ENCODE measurements at regions of chr1 and their contacts with region 1.

Region 1: DNA sequence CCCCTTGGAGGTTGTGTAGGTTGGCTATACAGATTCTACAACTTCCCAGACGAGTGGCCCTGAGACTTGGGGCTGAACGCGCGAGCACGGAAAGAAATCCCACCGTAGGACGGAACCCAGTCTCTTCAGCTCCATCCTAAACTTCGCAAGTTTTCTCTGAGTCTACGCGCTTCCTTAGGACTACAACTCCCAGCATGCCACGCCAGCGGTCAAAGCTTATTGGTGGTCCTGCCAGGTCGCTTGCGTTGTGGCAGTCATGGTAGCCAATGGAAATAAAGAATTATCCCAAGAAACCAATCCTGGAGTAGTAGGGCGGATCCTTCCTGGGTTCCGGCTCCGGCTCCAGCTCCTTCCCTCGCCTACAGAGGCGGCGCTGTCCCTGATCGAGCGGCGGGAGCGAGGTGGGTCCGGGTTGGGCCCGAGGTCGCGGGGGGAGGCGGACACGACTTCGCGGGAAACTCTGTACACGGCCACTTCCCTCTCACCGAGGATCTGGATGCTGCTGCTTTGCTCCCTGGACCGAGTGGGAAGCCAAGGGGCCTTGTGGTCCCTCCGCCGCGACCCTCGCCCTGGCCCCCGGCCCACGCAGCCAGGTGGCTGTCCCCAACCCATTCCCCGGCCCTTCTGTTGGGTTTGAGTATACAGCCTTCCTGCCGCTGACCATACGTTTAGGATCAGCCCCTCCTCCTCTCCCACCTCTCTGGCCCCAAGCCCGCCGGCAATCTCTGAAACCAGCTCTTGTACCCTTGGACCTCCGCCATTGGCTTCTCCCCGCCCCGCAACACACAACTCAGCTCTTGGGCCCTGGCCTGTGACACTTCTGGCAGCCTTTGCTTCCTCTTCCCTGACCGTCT is at the start of gene ZNF691:
- DNase-seq: peak; percentile 92 to 96
- ATAC-seq: peak; percentile 98 to 100 (median 100)
- H3K4me3 ChIP-seq: peak within 1 kb of the TSS; percentile 73
- H3K27ac ChIP-seq: peak within 1 kb of the TSS; percentile 76
- H3K4me1 ChIP-seq: peaks cover 18% of the 10 kb centered on the region
- H3K27me3 ChIP-seq: no peaks in the 10 kb centered on the region
- CTCF ChIP-seq: peak; percentile 49
- total RNA-seq, gene ZNF691: 4.8 to 8.0 (median 6.4) TPM

Region 2: DNA sequence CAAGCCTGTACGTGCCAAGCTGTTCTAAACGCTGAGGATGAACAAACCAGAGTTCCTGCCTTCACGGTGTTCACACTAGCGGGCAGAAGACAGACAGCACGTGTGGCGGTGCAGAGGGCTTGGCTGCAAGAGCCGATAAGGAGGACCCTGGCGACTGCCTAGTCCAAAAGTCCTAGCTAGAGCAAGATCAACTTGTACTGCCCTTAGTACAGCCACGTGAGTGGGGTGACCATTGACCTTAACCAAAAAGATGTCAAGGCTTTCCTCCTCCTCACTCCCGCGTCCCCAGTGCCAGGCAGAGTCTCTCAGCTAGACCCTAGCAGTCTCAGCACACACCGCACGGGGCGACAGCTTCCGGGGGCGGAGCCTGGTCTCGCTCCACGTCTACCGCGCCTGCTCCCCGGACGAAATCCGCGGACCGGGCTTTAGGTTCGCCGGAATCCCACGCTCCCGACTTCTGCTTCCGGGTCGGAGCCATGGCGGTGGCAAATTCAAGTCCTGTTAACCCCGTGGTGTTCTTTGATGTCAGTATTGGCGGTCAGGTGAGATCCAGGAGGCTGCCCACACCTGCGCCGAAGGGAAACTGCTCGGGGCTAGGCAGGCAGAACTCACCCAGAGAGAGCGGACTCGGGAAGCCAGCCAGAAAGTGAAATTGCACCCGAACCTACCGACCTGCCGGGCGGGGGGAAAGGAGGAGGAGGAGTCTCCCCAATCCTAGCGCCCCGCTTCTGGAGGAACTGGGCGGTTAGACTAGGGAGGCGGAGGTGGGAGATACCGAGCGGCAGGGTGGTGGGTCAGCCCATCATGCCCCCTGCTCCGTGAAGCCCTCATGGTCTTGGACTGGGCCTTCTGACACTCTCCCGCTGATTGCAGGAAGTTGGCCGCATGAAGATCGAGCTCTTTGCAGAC is 188.3 kb before region 1 on chr1 and contains the start of gene PPIH:
- intact Hi-C with region 1: no loop called
- DNase-seq: peak; percentile 95 to 98
- ATAC-seq: peak; percentile 100
- H3K4me3 ChIP-seq: peak within 1 kb of the TSS; percentile 86
- H3K27ac ChIP-seq: peak within 1 kb of the TSS; percentile 85
- H3K4me1 ChIP-seq: peaks cover 6% of the 10 kb centered on the region
- H3K27me3 ChIP-seq: no peaks in the 10 kb centered on the region
- CTCF ChIP-seq: peak; percentile 44
- total RNA-seq, gene PPIH: 9.9 to 14.4 (median 10.8) TPM

Region 3: GRCh38 chr1:42816585-42817434 is 29.7 kb before region 1 on chr1 and contains the starts of genes ERMAP and SVBP:
- intact Hi-C with region 1: loop called in 1 of 2 experiments (anchors 1 kb)
- DNase-seq: peak; percentile 93 to 96
- ATAC-seq: peak; percentile 98 to 99 (median 98)
- H3K4me3 ChIP-seq: peak within 1 kb of the TSS; percentile 78
- H3K27ac ChIP-seq: peak within 1 kb of the TSS; percentile 97
- H3K4me1 ChIP-seq: peaks cover 19% of the 10 kb centered on the region
- H3K27me3 ChIP-seq: no peaks in the 10 kb centered on the region
- CTCF ChIP-seq: peak; percentile 3
- total RNA-seq, gene ERMAP: 1.8 to 3.7 (median 2.6) TPM
- total RNA-seq, gene SVBP: 11.7 to 18.4 (median 16.9) TPM